Panc1 (cell line): ENCODE measurements at regions of chr17 and their contacts with region 1.

Region 1: GRCh38 chr17:35816723-35817122 is 7.4 kb downstream of the TAF15 start:
- DNase-seq: no peak
- ATAC-seq: no peak
- H3K4me3 ChIP-seq: no peak overlapping the region
- H3K27ac ChIP-seq: no peak overlapping the region
- H3K4me1 ChIP-seq: peaks cover 2% of the 10 kb centered on the region; the same call in 1 of the 2 replicates
- H3K27me3 ChIP-seq: no peaks in the 10 kb centered on the region
- CTCF ChIP-seq: no peak

Region 2: DNA sequence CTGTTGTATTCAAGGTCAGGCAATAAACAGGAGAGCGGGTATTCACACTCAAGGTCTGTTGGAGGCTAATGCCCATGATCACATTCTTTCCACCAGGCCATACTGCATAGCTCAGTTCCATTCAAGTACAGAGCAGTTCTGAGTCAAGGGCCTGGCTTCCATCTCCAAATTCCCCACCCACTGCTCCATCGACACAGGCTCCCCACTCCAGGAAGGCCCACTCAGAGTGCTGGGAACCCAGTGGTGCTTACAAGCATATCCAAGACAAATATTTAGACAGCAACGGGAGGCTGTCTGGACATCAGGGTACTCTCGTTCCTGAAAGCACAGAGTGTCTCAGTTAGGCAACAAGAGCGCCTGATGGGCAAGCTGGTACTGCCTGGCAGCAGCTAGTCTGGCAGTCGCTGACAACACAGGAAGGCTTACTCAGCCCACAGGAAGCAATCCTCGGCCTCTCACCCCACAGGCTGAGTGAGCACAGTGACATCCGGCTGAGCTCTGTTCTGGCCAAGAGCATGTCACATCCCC is 794.1 kb before region 1 on chr17:
- CTCF ChIA-PET with region 1: no interaction called
- POLR2A ChIA-PET with region 1: interaction called, 10 read pairs
- in situ Hi-C with region 1: no loop called
- intact Hi-C with region 1: no loop called
- DNase-seq: no peak
- ATAC-seq: peak; percentile 89
- H3K4me3 ChIP-seq: no peak overlapping the region
- H3K27ac ChIP-seq: no peak overlapping the region
- H3K4me1 ChIP-seq: peaks cover 8% of the 10 kb centered on the region; the same call in 1 of the 2 replicates
- H3K27me3 ChIP-seq: no peaks in the 10 kb centered on the region
- CTCF ChIP-seq: no peak

Region 3: DNA sequence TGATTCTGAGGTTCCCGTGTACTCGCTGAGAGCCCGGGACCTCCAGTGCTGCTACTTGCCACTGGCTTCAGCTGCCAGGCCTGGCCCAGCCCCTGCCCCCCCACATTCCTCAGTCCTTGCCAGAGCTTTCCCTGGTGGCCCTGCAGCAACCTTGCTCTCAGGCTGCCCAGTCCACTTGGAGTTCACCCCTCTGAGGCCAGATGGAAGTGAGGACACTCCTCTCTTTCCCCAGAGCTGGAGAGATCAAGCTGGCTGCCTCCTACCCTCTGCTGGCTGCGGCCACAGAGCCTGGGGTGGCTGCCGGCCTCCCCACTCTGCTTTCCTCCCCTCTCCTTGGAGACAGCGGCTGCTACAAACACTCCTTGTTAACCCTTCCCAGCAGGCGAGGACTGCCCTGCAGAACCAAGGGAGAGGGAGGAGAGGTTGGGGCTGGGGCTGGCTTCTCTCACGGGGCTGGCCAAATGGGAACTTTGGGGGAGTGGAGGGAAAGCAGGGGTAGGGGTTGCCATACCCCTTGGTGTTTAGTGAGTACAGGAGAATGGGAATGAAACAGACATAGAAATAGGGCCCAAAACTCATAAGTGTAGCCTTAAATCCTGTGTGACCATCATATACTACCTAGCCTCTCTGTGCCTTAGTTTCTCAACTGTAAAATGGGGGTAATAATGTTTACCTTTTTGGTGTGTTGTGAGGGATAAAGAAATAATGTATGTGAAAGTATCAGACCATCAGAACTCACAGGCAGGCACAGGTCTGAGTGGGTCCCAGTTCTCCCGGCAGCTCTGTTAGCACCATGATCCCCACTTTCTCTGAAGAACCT is 63.6 kb before region 1 on chr17 and contains the start of gene GAS2L2:
- CTCF ChIA-PET with region 1: interaction called, 13 read pairs
- POLR2A ChIA-PET with region 1: no interaction called
- in situ Hi-C with region 1: no loop called
- intact Hi-C with region 1: no loop called
- DNase-seq: no peak
- ATAC-seq: peak; percentile 8; the same call in 1 of the 2 replicates
- H3K4me3 ChIP-seq: no peak within 1 kb of the TSS
- H3K27ac ChIP-seq: no peak within 1 kb of the TSS
- H3K4me1 ChIP-seq: peaks cover 8% of the 10 kb centered on the region
- H3K27me3 ChIP-seq: peaks cover 4% of the 10 kb centered on the region
- CTCF ChIP-seq: no peak
- total RNA-seq, gene GAS2L2: not detected

Region 4: GRCh38 chr17:35764123-35764991 is 52.4 kb before region 1 on chr17:
- CTCF ChIA-PET with region 1: interaction called, 12 read pairs
- POLR2A ChIA-PET with region 1: no interaction called
- in situ Hi-C with region 1: no loop called
- intact Hi-C with region 1: no loop called
- DNase-seq: peak; percentile 43
- ATAC-seq: peak; percentile 98
- H3K4me3 ChIP-seq: peak overlapping the region; percentile 46 to 64
- H3K27ac ChIP-seq: no peak overlapping the region
- H3K4me1 ChIP-seq: peaks cover 4% of the 10 kb centered on the region; the same call in 1 of the 2 replicates
- H3K27me3 ChIP-seq: peaks cover 3% of the 10 kb centered on the region; the same call in 1 of the 2 replicates
- CTCF ChIP-seq: peak; percentile 97